A673 (cell line): ENCODE measurements at regions of chr5 and their contacts with region 1.

Region 1: DNA sequence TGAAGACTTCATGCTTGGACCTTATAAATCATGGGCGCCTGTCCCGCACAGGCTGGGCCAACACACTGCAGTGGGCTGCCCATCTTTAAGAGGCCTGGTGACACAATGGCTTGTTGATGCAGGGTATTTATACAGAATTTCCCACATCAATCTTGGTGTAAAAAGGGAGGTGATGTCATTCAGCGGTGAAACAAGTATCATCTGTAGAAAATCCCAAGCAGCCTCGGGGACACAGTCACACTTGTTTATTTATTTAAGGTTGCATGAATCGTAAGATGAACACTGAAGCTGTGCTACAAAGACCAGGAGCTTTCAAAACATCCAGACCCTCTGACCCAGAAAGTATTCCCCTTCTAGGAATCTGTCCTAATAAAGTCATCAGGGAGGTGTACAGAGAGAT is 40.5 kb downstream of the SMIM23 start:
- DNase-seq: no peak
- H3K4me3 ChIP-seq: no peak overlapping the region
- H3K27ac ChIP-seq: no peak overlapping the region
- H3K4me1 ChIP-seq: no peaks in the 10 kb centered on the region
- H3K27me3 ChIP-seq: peaks cover 10% of the 10 kb centered on the region
- CTCF ChIP-seq: no peak

Region 2: GRCh38 chr5:171672556-171672955 is 153.6 kb before region 1 on chr5:
- CTCF ChIA-PET with region 1: interaction called, 13 read pairs
- POLR2A ChIA-PET with region 1: no interaction called
- intact Hi-C with region 1: no loop called
- DNase-seq: no peak
- H3K4me3 ChIP-seq: no peak overlapping the region
- H3K27ac ChIP-seq: no peak overlapping the region
- H3K4me1 ChIP-seq: no peaks in the 10 kb centered on the region
- H3K27me3 ChIP-seq: peaks cover 8% of the 10 kb centered on the region
- CTCF ChIP-seq: no peak